Heart right ventricle (tissue), 16 donors: ENCODE measurements at regions of chr9 and their contacts with region 1.

Region 1: DNA sequence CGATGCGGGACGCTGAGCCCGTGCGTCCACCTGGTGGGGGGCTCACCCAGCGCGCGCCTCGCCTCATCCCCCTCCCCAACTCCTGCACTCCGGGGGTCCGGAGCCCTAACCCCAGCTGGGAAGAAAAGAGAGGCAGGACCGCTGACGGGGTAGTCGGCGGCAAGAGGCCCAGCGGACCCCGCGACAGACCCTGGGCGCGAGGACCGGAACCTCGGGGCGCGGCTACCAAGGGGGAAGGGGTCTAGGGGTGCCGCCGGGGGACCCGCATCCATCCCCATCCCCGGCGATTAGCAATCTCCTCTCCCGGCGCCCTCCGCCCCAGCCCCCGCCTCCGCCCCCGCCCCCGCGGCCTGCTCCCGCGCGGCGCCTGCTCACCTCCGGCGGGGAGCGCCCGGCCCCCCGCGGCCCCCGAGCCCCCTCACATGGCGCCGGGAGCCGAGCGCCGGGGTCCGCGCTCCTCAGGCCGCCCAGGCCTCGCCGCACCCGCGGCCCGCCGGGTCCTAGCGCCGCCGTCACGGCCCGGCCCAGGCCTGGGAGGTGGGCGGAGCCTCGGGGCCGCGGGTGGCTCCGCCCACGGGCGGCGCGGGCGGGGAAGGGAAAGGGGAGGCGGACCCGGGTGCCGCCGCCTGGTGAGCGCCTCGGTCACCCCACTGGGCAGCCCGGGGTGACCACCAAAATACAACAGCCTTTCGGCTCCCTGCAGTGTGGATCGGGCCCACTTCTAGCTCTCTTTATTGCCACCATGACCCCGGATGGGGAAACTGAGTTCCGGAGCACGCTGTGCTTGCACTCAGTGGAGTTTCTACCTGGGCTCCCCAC is at the start of gene ST6GALNAC6:
- DNase-seq: peak; percentile 72 to 82
- ATAC-seq: peak; percentile 54 to 85 (median 76)
- H3K4me3 ChIP-seq: peak within 1 kb of the TSS; percentile 88 to 100 (median 98)
- H3K27ac ChIP-seq: peak within 1 kb of the TSS; percentile 85 to 98 (median 95)
- H3K4me1 ChIP-seq: peaks cover 24 to 59% (median 46%) of the 10 kb centered on the region in 9 donors
- H3K27me3 ChIP-seq: no peaks in the 10 kb centered on the region
- CTCF ChIP-seq: peak in 3 of 9 donors; percentile 30 to 35 (median 35)
- total RNA-seq, gene ST6GALNAC6: 32.8 to 52.0 (median 44.7) TPM

Region 2: GRCh38 chr9:127715394-127716337 is 183.7 kb before region 1 on chr9 and contains the starts of genes PTRH1 and TTC16:
- intact Hi-C with region 1: no loop called
- DNase-seq: peak; percentile 97 to 98
- ATAC-seq: peak; percentile 95 to 98 (median 96)
- H3K4me3 ChIP-seq: peak within 1 kb of the TSS; percentile 52 to 95 (median 82)
- H3K27ac ChIP-seq: peak within 1 kb of the TSS; percentile 4 to 91 (median 84)
- H3K4me1 ChIP-seq: peaks cover 5 to 23% (median 18%) of the 10 kb centered on the region in 9 donors
- H3K27me3 ChIP-seq: no peaks in the 10 kb centered on the region
- CTCF ChIP-seq: no peak
- total RNA-seq, gene PTRH1: 8.1 to 14.1 (median 11.5) TPM
- total RNA-seq, gene TTC16: 0.04 to 0.61 (median 0.32) TPM in 9 of 10 donors, not detected in the other

Region 3: DNA sequence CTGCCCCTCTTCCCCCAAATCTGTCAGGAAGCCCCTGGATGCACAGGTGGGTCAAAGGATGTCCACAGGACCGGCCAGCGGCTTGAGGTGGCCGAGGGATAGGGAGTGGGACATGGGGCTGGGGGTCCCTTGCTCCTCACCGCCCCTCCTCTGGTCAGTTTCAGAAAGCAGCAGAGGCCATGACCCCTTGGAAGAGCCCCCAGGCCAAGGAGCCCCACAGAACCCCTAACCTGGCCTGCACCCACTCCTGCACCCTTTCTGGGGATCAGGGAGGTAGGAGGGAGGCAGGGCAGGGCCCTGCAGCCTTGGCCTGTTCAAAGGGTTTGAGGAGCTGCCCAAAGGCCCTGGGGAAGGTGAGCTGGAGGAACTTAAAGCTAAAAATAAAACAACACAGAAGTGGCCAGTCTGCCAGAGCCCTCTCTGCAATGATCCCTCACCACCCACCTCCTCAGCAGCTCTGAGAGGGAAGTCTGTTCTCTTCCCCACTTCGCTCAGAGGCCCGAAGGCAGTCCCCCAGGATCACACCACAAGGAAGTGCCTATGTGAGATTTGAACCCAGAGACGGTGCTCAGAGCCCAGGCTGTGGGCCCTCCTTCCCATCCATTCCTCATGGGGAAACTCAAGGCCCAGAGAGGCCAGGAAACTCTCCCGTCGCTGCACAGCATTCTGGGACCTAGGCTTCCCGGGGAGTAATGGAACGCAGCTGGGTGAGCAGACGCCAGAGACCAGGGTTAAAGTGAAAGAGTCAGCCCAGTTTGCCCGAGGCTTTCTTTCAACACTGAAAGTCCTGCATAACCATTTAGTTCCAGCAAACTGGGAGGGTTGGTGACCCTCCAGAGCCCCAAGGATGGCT is 45.8 kb before region 1 on chr9:
- intact Hi-C with region 1: no loop called
- DNase-seq: no peak
- ATAC-seq: no peak
- H3K4me3 ChIP-seq: peak overlapping the region; percentile 71 to 90 (median 78)
- H3K27ac ChIP-seq: peak overlapping the region; percentile 91 to 99 (median 95)
- H3K4me1 ChIP-seq: peaks cover 28 to 76% (median 51%) of the 10 kb centered on the region in 9 donors
- H3K27me3 ChIP-seq: no peaks in the 10 kb centered on the region
- CTCF ChIP-seq: no peak

Region 4: DNA sequence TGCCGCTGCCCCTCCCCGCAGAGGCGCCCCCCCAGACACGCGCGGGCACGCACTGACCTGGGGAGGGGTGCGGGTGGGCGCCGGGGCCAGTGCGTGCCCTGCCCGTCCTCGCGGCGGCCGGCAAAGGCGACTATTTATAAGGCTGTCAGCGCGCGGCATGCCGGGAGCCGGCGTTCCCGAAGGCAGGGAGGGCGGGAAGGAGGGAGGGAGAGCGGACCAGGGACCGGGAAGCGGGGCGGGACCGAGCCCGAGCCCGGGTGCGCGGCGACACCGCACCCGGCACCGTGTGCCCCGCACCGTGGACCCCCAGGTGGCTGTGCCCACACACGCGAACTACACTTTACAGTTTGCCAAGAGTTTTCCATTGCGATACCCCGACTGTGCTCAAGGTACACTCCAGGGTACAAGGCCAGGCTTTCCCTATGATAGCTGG is 21.8 kb before region 1 on chr9 and contains the start of gene AK1:
- intact Hi-C with region 1: loop called in 1 of 10 experiments (anchors 2 kb)
- DNase-seq: peak; percentile 85 to 86
- ATAC-seq: peak; percentile 70 to 86 (median 78)
- H3K4me3 ChIP-seq: peak within 1 kb of the TSS; percentile 50 to 81 (median 69)
- H3K27ac ChIP-seq: peak within 1 kb of the TSS; percentile 61 to 93 (median 88)
- H3K4me1 ChIP-seq: peaks cover 18 to 66% (median 50%) of the 10 kb centered on the region in 9 donors
- H3K27me3 ChIP-seq: peaks cover 0 to 12% (median 0%) of the 10 kb centered on the region in 7 donors
- CTCF ChIP-seq: no peak
- total RNA-seq, gene AK1: 553 to 918 (median 731) TPM